Aorta (tissue), 5 donors: ENCODE measurements at regions of chr18 and their contacts with region 1.

Region 1: DNA sequence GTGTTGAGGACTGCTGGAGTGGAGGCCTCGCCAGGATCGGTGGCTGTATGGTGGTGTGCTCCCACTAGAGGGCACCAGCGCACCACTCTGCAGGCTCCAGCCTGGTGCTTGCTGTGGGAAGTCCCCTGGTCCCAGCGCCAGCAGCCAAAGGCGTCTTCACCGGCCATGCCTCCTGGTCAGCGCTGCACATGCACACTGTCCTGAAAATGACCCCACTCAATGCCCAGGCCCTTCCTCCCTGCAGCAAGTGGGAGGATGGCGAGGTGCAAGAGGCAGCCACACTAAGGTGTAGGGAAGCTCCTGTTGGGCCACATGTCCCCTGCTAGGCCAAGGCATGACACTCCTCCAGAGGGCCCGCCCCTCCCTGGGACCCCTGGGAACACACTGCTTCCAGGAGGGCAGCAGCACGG is 136.5 kb downstream of the CTIF start:
- DNase-seq: peak; percentile 95
- ATAC-seq: peak; percentile 92
- H3K4me3 ChIP-seq: no peak overlapping the region
- H3K27ac ChIP-seq: no peak overlapping the region
- H3K4me1 ChIP-seq: peaks cover 1 to 5% of the 10 kb centered on the region in 2 donors
- H3K27me3 ChIP-seq: no peaks in the 10 kb centered on the region

Region 2: DNA sequence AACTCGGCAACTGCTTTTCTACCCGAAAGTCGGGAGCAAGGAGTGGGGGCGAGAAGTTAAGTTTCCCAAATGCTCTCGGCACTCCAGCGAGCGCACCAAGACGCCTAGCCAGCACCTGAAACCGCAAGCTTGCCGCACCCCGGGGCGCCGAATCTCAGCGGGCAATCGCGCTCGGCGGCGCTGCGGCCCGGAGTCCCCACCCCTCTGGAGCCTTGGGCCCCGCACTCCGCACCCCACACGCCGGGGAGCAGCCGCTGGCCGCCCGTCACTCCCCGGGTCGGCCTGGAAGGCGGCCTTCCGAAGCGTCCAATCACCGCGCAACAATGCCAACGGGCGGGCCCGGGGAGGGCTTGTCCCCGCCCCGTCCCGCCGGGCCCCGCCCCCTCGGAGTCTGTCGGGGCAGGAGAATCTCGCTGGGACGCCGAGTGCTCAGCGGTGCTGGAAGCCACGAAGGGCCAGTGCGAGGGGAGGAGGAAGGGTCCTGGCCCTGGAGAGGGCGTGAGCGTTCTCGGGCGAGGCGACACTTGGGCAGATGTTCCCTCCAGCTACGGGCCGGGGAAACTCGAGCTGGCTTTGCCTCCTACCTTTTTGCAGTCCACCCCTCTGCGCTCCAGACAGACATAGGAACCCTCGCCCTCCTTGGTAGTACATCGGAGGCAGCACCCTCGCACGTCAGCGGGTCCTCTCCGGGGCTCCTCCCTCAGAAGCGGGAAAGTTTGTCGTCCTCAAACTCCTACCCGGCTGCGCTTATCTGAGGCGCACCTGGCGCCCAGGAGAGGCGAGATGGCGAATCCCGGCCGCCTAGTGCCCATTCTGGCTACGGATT is 265.0 kb before region 1 on chr18:
- intact Hi-C with region 1: no loop called
- DNase-seq: peak; percentile 95 to 98
- ATAC-seq: peak; percentile 97
- H3K4me3 ChIP-seq: peak overlapping the region; percentile 94 to 97
- H3K27ac ChIP-seq: peak overlapping the region; percentile 16 to 81
- H3K4me1 ChIP-seq: peaks cover 0 to 5% of the 10 kb centered on the region in 2 donors
- H3K27me3 ChIP-seq: no peaks in the 10 kb centered on the region

Region 3: DNA sequence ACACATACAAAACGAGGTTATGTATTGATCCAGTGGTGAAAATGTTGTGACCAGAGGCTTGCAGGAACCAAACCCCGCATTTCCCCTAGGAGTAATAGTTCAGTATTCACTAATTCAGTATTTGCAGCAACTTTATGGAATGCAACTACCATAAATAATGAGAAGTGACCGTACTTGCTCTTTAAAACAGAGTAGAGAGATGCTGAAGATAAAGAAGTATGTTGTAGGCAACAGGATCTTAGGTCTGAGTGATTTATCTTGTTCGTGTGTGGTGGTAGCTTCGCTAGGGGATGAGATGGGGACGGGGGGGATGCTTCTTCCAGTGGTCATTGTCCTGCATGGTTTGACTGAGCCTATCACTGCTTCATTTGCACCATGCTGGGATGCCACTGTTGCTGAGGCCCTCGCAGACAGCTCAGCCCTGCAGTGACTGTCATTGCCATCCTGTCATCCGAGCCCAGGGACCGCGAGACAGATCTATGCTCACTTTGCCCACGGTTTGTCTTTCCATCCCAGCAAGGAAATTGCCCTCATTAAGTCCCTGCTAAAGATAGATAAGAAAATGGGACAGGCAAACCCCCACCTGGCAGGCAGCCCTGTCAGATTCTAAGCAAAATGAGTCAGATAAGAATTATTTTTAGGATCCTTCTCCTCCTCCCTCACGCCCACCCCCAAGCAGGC is 44.8 kb after region 1 on chr18:
- intact Hi-C with region 1: no loop called
- DNase-seq: peak; percentile 62 to 74
- ATAC-seq: no peak
- H3K4me3 ChIP-seq: no peak overlapping the region
- H3K27ac ChIP-seq: no peak overlapping the region
- H3K4me1 ChIP-seq: peaks cover 4% of the 10 kb centered on the region in 2 donors
- H3K27me3 ChIP-seq: no peaks in the 10 kb centered on the region

Region 4: DNA sequence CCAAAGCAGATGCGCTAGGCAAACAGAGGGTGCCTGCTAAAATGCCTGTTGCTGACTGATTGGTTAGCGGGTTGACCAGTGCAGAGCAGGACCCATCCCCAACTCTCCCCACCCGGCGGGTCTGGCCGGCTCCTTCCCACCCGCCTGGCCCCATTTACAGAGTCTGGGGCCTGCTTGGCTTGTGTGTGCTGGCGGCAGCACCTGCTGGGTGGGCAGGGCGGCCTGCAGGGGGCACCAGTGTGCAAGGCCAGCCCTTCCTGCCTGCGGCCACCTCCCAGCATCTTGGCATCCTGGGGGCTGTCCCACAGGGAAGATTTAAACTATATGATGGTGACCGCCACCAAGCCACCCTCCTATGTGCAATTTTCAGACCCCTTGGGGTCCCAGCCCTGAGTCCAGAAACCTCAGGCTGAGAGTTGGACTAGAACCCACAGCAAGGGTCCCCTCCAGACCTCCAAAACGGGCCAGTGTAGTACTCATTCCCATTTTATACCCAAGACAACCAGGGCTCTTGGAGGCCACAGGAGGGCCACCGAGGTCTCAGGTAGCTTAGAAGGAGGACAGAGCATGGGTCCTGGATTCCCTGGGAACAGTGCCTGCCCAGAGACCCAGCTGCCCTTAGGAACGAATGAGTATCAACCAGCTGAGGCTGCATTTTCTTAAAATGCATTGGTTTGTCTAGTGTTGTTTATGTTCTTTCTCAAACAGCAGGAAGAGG is 101.8 kb after region 1 on chr18:
- intact Hi-C with region 1: loop called in 1 of 2 experiments (anchors 5 kb)
- DNase-seq: peak; percentile 75 to 85
- ATAC-seq: peak; percentile 55
- H3K4me3 ChIP-seq: no peak overlapping the region
- H3K27ac ChIP-seq: no peak overlapping the region
- H3K4me1 ChIP-seq: no peaks in the 10 kb centered on the region
- H3K27me3 ChIP-seq: no peaks in the 10 kb centered on the region

Region 5: DNA sequence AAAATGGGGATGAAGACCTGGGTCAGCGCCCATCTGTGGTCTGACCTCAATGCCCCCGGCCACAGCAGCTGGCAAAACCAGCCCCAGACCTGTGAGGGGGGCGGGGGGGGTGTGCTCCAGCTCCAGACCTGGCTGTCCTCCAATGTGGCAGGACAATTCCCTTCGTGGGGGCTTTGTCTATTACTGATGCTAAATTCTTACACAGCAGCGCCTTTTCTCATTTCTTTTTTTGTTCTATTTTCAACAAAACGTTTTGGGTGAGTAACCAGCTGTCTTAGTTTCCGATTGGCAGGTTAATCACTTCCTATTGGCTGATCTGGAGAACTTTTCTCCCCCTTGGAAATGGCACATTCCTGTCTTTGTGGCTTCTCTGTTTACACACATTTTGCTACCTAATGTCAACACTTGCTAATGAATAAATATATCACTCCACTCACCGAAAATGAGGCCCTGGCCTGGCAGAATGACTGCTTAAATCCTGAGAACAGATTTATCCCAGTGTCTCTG is 271.0 kb after region 1 on chr18:
- intact Hi-C with region 1: loop called (anchors 2 to 10 kb)
- DNase-seq: peak in 1 of 2 donors; percentile 71
- ATAC-seq: no peak
- H3K4me3 ChIP-seq: peak overlapping the region; percentile 65 to 99
- H3K27ac ChIP-seq: peak overlapping the region; percentile 17 to 52
- H3K4me1 ChIP-seq: peaks cover 2 to 6% of the 10 kb centered on the region in 2 donors
- H3K27me3 ChIP-seq: no peaks in the 10 kb centered on the region

Region 6: DNA sequence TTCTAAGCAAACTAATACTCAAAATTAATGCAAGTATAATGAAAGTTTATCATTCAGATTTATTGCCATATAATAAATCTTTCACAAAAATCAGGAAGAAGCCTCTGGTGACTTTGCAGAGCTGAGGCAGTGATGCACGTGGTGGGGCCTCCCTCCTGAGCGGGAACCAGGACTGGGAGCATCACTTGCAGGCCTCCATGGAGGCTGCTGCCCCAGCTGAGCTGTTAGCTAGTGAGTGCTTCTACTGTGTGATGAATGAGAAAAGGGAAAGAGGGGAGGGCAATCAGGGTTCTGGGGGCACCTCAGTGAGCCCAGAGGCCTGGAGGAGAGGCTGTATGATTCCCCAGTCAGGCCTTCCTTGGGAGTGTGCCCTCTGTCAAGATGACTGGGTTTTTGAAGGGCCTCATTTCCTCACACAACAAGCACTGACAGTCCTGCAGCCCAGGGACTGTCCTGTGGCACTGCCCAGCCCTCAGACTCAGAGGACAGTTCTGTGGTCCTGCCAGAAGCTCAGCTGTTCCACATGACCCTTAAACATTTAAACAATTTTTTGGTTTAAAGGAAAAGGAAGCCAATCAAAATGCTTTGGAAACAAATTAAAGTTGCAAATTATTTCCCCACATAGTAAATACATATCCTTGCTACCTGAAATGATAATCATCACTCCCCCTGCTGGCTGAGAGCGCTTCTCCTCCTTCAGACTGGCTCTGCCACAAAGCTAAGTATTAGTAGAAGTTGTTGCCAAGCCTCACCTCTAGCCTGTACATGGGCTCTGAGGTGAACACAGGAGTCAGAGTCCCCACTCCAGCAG is 366.3 kb after region 1 on chr18:
- intact Hi-C with region 1: loop called in 1 of 2 experiments (anchors 5 kb)
- DNase-seq: no peak
- ATAC-seq: peak; percentile 58
- H3K4me3 ChIP-seq: no peak overlapping the region
- H3K27ac ChIP-seq: no peak overlapping the region
- H3K4me1 ChIP-seq: no peaks in the 10 kb centered on the region
- H3K27me3 ChIP-seq: no peaks in the 10 kb centered on the region

Region 7: GRCh38 chr18:49178736-49179135 is 503.4 kb after region 1 on chr18:
- intact Hi-C with region 1: loop called (anchors 5 kb)
- DNase-seq: no peak
- ATAC-seq: no peak
- H3K4me3 ChIP-seq: no peak overlapping the region
- H3K27ac ChIP-seq: no peak overlapping the region
- H3K4me1 ChIP-seq: no peaks in the 10 kb centered on the region
- H3K27me3 ChIP-seq: no peaks in the 10 kb centered on the region

Region 8: GRCh38 chr18:49223837-49224529 is 548.6 kb after region 1 on chr18:
- intact Hi-C with region 1: no loop called
- DNase-seq: no peak
- ATAC-seq: no peak
- H3K4me3 ChIP-seq: no peak overlapping the region
- H3K27ac ChIP-seq: no peak overlapping the region
- H3K4me1 ChIP-seq: peaks cover 1 to 3% of the 10 kb centered on the region in 2 donors
- H3K27me3 ChIP-seq: no peaks in the 10 kb centered on the region

Region 9: GRCh38 chr18:49238433-49239042 is 563.2 kb after region 1 on chr18:
- intact Hi-C with region 1: loop called in 1 of 2 experiments (anchors 10 kb)
- DNase-seq: no peak
- ATAC-seq: no peak
- H3K4me3 ChIP-seq: no peak overlapping the region
- H3K27ac ChIP-seq: no peak overlapping the region
- H3K4me1 ChIP-seq: no peaks in the 10 kb centered on the region
- H3K27me3 ChIP-seq: no peaks in the 10 kb centered on the region

Region 10: GRCh38 chr18:49412679-49413078 is 737.3 kb after region 1 on chr18:
- intact Hi-C with region 1: loop called (anchors 1 to 10 kb)
- DNase-seq: no peak
- ATAC-seq: no peak
- H3K4me3 ChIP-seq: no peak overlapping the region
- H3K27ac ChIP-seq: no peak overlapping the region
- H3K4me1 ChIP-seq: peaks cover 0 to 2% of the 10 kb centered on the region in 2 donors
- H3K27me3 ChIP-seq: no peaks in the 10 kb centered on the region